Sigmoid colon (tissue), 7 donors: ENCODE measurements at regions of chr9 and their contacts with region 1.

Region 1: GRCh38 chr9:90914868-90915483 is 113.4 kb downstream of the SYK start:
- DNase-seq: peak; percentile 86
- H3K4me3 ChIP-seq: no peak overlapping the region
- H3K27ac ChIP-seq: no peak overlapping the region
- H3K4me1 ChIP-seq: peaks cover 0 to 2% (median 0%) of the 10 kb centered on the region in 4 donors
- H3K27me3 ChIP-seq: no peaks in the 10 kb centered on the region
- CTCF ChIP-seq: peak; percentile 91 to 93 (median 92)
- EP300 ChIP-seq: no peak
- POLR2A ChIP-seq: no peak

Region 2: GRCh38 chr9:90870621-90871326 is 44.2 kb before region 1 on chr9:
- intact Hi-C with region 1: no loop called
- DNase-seq: no peak
- H3K4me3 ChIP-seq: no peak overlapping the region
- H3K27ac ChIP-seq: no peak overlapping the region
- H3K4me1 ChIP-seq: peaks cover 0 to 2% (median 0%) of the 10 kb centered on the region in 4 donors
- H3K27me3 ChIP-seq: no peaks in the 10 kb centered on the region
- CTCF ChIP-seq: peak; percentile 35 to 82 (median 66)
- EP300 ChIP-seq: no peak
- POLR2A ChIP-seq: no peak

Region 3: DNA sequence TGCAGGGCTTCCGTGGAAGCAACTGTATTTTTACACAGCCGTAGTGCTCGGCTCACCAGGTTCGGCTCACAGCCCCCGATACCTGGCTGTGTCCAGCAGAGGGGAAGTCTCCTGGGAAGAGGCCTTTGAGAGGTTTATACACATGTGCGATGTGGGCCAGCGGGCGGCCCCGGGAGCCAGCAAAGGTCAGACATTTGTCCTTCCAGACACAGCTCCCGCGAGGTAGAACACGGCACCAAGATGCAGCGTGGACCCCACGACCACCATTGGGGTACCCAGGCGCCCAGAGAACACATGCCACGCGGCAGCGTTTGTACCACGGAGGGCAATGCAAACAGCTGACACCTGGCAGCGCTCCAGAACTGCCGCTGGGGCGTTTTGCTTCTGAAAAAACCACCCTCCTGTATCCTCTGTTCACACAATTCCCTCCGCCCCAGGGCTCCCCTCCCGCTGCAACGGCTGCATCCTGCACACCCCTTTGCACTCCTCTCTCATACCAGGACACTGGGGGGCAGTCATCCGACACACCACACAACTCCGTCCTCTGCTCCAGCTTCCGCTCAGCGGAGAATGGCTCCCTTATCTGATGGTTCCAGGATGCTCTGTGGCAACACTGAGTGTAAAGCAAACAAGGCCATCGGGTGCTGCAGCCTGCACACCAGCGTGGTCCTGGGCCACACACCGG is 122.0 kb after region 1 on chr9:
- intact Hi-C with region 1: loop called (anchors 10 kb)
- DNase-seq: peak; percentile 93
- H3K4me3 ChIP-seq: no peak overlapping the region
- H3K27ac ChIP-seq: peak overlapping the region; percentile 23 to 67 (median 60)
- H3K4me1 ChIP-seq: peaks cover 0 to 20% (median 19%) of the 10 kb centered on the region in 4 donors
- H3K27me3 ChIP-seq: no peaks in the 10 kb centered on the region
- CTCF ChIP-seq: peak; percentile 55 to 80 (median 60)
- EP300 ChIP-seq: no peak
- POLR2A ChIP-seq: no peak

Region 4: DNA sequence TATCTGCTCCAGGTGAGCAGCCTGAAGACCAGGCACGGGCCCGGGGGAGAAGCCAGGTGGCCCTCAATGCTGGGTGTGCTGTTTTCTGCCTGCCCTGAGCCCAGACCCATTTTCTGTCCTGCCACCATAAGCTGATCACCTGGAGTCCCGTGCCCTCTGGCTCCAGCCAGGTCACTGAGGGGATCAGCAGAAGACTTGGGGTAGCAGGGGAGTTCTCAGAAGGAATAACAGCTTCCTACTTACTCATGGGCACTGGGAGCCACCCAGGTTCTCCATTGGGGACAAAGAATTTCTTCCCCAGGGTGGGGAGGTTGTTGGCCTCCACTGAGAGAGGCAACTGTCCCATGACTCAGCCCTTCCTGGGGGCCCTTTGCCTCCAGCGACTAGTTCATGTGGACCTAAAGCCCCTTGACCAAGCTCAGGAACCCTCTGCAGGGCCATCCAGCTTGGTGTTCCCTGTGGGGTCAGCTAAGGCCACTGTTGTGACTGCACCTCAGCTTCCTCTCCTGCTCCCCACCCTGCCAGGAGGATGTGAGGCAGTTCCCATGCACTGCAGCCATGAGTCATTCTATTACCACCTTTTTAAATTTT is 271.6 kb after region 1 on chr9:
- intact Hi-C with region 1: loop called (anchors 5 kb)
- DNase-seq: no peak
- H3K4me3 ChIP-seq: no peak overlapping the region
- H3K27ac ChIP-seq: no peak overlapping the region
- H3K4me1 ChIP-seq: peaks cover 0 to 12% (median 5%) of the 10 kb centered on the region in 4 donors
- H3K27me3 ChIP-seq: no peaks in the 10 kb centered on the region
- CTCF ChIP-seq: no peak
- EP300 ChIP-seq: no peak
- POLR2A ChIP-seq: no peak

Region 5: DNA sequence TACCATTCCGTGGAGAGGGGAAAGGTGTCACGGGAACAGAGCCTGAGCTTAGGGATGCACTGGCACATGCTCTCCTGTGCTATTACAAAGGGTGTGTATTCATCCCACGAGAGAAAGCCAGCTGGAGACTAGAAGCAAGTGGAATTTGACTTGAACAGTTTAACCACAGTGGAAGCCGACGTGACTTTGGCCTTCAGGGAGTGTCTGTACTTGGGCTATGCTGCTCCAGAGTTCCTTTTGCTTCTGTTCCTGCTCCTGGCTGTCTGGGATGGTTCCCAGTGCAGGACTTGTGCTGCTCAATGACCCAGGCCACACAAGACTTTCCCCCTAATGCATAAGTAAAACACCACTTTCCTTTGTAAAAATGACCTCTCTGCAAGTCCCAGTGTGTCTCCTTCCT is 516.5 kb after region 1 on chr9:
- intact Hi-C with region 1: loop called (anchors 2 kb)
- DNase-seq: no peak
- H3K4me3 ChIP-seq: no peak overlapping the region
- H3K27ac ChIP-seq: no peak overlapping the region
- H3K4me1 ChIP-seq: peaks cover 0 to 5% (median 0%) of the 10 kb centered on the region in 4 donors
- H3K27me3 ChIP-seq: no peaks in the 10 kb centered on the region
- CTCF ChIP-seq: no peak
- EP300 ChIP-seq: no peak
- POLR2A ChIP-seq: no peak

Region 6: GRCh38 chr9:91681461-91682305 is 766.7 kb after region 1 on chr9:
- intact Hi-C with region 1: loop called (anchors 2 kb)
- DNase-seq: peak; percentile 88
- H3K4me3 ChIP-seq: peak overlapping the region in 2 of 4 donors; percentile 21 to 22
- H3K27ac ChIP-seq: no peak overlapping the region
- H3K4me1 ChIP-seq: peaks cover 0 to 8% (median 4%) of the 10 kb centered on the region in 4 donors
- H3K27me3 ChIP-seq: no peaks in the 10 kb centered on the region
- CTCF ChIP-seq: peak; percentile 51 to 88 (median 76)
- EP300 ChIP-seq: no peak
- POLR2A ChIP-seq: no peak